Heart right ventricle (tissue), 16 donors: ENCODE measurements at regions of chr2 and their contacts with region 1.

Region 1: DNA sequence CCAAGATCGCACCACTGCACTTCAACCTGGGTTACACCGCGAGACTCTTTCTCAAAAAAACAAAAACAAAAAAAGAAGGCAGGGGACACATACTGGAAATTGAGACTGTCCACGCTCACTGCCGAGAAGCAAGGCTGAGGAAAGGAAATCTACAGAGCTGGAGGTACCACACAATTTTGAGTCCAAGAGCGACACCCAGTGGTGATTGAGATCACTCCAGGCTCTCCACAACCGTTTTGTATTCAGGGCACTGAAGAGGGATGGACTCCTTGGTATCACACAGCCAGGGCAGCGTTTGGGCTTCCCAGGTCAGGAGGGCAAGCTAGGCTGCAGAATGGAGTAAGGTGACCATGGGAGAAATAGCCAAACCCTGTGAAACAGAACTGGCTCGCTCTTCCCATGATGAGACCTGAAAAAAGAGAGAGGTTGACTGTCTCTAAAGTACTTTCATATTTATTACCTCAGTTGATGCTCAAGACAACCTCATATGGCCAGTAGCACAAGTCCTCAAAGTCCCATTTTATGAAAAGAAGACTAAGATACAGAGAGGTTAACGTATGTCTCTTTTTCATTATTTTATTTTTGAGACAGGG is 74.5 kb upstream of the YPEL5 start:
- DNase-seq: peak; percentile 17 to 70
- ATAC-seq: peak; percentile 52 to 90 (median 88)
- H3K4me3 ChIP-seq: no peak overlapping the region
- H3K27ac ChIP-seq: no peak overlapping the region
- H3K4me1 ChIP-seq: peaks cover 0 to 8% (median 0%) of the 10 kb centered on the region in 9 donors
- H3K27me3 ChIP-seq: peaks cover 0 to 53% (median 16%) of the 10 kb centered on the region in 7 donors
- CTCF ChIP-seq: peak; percentile 24 to 74 (median 70)

Region 2: DNA sequence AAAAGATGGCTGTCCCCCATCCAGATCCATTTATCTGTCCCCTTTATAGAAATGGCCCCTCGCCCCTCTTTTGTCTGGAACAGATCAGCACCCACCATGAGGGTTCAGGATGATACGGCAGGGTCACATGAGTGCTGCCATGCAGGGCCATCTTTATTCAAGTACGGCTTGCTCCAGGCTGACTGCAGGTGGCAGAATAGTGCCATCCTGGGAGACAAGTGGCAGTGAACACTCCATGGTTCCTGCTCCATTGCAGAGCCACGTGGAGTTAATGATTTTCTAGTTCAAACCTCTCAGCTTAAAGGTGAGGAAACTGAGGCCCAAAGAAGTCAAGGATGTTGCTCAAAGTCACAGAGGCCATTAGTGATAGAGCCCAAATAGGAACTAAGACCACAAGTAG is 776.5 kb before region 1 on chr2:
- intact Hi-C with region 1: loop called in 2 of 10 experiments (anchors 10 kb)
- DNase-seq: no peak
- ATAC-seq: no peak
- H3K4me3 ChIP-seq: no peak overlapping the region
- H3K27ac ChIP-seq: no peak overlapping the region
- H3K4me1 ChIP-seq: no peaks in the 10 kb centered on the region
- H3K27me3 ChIP-seq: peaks cover 0 to 38% (median 15%) of the 10 kb centered on the region in 7 donors
- CTCF ChIP-seq: peak in 7 of 9 donors; percentile 22 to 44 (median 27)

Region 3: GRCh38 chr2:29865512-29865911 is 206.8 kb before region 1 on chr2:
- intact Hi-C with region 1: no loop called
- DNase-seq: no peak
- ATAC-seq: no peak
- H3K4me3 ChIP-seq: no peak overlapping the region
- H3K27ac ChIP-seq: no peak overlapping the region
- H3K4me1 ChIP-seq: no peaks in the 10 kb centered on the region
- H3K27me3 ChIP-seq: peaks cover 0 to 16% (median 0%) of the 10 kb centered on the region in 7 donors
- CTCF ChIP-seq: no peak